Transverse colon (tissue), 4 donors: ENCODE measurements at regions of chr9 and their contacts with region 1.

Region 1: GRCh38 chr9:108053555-108054061 is 564.0 kb upstream of the KLF4 start:
- DNase-seq: peak; percentile 68
- H3K4me3 ChIP-seq: peak overlapping the region in 1 of 4 donors; percentile 1
- H3K27ac ChIP-seq: peak overlapping the region; percentile 26 to 72 (median 55)
- H3K4me1 ChIP-seq: peaks cover 5 to 65% (median 36%) of the 10 kb centered on the region in 4 donors
- H3K27me3 ChIP-seq: no peaks in the 10 kb centered on the region
- CTCF ChIP-seq: no peak
- EP300 ChIP-seq: no peak
- POLR2A ChIP-seq: no peak

Region 2: GRCh38 chr9:108093773-108094675 is 40.4 kb after region 1 on chr9:
- in situ Hi-C with region 1: no loop called
- intact Hi-C with region 1: loop called (anchors 1 kb)
- DNase-seq: peak; percentile 63
- H3K4me3 ChIP-seq: no peak overlapping the region
- H3K27ac ChIP-seq: peak overlapping the region; percentile 51 to 77 (median 62)
- H3K4me1 ChIP-seq: peaks cover 0 to 14% (median 1%) of the 10 kb centered on the region in 4 donors
- H3K27me3 ChIP-seq: no peaks in the 10 kb centered on the region
- CTCF ChIP-seq: no peak
- EP300 ChIP-seq: no peak
- POLR2A ChIP-seq: no peak

Region 3: DNA sequence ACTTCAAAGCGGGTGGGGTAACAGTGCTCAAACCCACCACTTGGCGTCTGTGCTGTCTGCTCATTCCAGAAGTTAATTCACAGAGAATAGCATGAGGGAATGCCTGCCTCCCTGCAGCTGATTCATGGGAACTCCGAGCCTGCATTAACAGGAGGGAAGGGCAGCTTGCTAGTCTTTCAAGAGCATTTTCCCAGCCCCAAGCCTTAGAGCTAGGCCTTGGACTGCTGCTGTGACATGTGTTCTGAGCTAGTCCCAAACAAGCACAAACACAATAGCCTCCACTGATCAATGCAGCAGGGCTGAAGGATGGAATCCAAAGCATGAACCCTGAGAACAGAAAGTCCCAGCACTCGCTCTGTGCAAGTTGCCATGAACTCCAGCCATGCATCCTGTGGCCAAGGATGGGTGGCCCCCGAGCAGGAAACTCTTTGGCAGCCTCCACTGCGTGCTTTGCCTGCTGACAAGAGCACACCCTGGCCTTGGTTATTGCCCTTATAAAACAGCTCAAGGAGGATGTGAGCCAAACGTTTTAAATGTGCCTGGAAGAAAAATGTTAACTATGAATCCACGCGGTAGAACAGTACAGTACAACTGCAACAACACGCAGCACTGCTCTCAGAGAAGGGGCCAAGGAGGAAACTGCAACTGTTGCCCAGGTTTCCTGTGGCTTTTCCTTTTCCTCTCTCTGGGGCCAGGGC is 89.0 kb after region 1 on chr9:
- in situ Hi-C with region 1: no loop called
- intact Hi-C with region 1: loop called (anchors 5 kb)
- DNase-seq: peak; percentile 85
- H3K4me3 ChIP-seq: no peak overlapping the region
- H3K27ac ChIP-seq: peak overlapping the region; percentile 69 to 83 (median 76)
- H3K4me1 ChIP-seq: peaks cover 13 to 21% (median 17%) of the 10 kb centered on the region in 4 donors
- H3K27me3 ChIP-seq: no peaks in the 10 kb centered on the region
- CTCF ChIP-seq: peak in 3 of 5 experiments; percentile 5 to 41 (median 29)
- EP300 ChIP-seq: peak; percentile 86
- POLR2A ChIP-seq: no peak

Region 4: DNA sequence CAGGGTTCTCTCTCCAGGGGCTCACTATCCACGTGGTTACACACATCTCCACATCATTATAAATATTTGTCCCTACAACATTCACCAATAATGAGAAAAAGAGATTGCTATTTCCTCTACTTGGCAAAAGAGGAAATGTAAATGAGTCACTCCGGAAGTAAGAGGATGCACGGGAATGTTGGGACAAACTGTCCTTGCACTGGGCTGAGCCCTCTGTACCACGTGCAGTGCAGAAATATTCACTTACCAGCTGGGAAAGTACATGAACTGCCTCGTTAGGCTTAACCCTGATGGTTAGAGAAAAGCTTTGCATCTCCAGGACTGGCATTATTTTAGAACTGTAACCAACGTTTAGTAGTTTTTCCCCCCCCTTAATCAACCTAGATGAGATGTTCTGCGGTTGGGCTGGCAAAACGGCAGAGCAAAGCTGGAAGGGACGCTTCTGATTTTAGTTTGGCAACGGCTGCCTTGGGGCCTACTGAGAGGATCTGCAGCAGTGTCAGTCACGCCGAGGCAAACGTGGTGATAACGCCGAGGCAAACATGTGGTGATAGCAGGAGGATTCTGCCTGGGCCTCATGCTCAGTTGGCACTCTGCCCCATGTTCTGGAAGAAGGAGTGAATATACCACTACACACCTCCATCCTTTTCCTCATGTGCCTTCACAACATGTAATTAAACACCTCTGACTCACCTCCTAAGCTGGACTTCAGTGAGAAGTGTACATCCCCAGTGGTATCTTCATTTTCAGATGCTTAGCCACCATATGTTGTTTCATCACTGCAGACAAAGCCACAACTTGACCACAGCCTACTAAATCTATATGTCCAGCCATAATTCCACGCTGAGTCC is 97.4 kb after region 1 on chr9:
- in situ Hi-C with region 1: loop called in 1 of 4 experiments (anchors 25 kb)
- intact Hi-C with region 1: no loop called
- DNase-seq: no peak
- H3K4me3 ChIP-seq: no peak overlapping the region
- H3K27ac ChIP-seq: peak overlapping the region in 3 of 4 donors; percentile 34 to 61 (median 35)
- H3K4me1 ChIP-seq: peaks cover 0 to 4% (median 0%) of the 10 kb centered on the region in 4 donors
- H3K27me3 ChIP-seq: no peaks in the 10 kb centered on the region
- CTCF ChIP-seq: no peak
- EP300 ChIP-seq: peak; percentile 40
- POLR2A ChIP-seq: no peak